ENCODE measurements at regions of chr15 and their contacts with region 1.

Region 1: GRCh38 chr15:42065033-42065432 is 29.3 kb downstream of the PLA2G4D start:
- DNase-seq: no peak
- H3K4me3 ChIP-seq: no peak overlapping the region
- H3K4me1 ChIP-seq: no peaks in the 10 kb centered on the region
- H3K27me3 ChIP-seq: no peaks in the 10 kb centered on the region

Region 2: GRCh38 chr15:42474827-42475226 is 409.8 kb after region 1 on chr15:
- in situ Hi-C with region 1: loop called (anchors 5 kb)
- DNase-seq: no peak
- H3K4me3 ChIP-seq: no peak overlapping the region
- H3K4me1 ChIP-seq: no peaks in the 10 kb centered on the region
- H3K27me3 ChIP-seq: no peaks in the 10 kb centered on the region

Region 3: DNA sequence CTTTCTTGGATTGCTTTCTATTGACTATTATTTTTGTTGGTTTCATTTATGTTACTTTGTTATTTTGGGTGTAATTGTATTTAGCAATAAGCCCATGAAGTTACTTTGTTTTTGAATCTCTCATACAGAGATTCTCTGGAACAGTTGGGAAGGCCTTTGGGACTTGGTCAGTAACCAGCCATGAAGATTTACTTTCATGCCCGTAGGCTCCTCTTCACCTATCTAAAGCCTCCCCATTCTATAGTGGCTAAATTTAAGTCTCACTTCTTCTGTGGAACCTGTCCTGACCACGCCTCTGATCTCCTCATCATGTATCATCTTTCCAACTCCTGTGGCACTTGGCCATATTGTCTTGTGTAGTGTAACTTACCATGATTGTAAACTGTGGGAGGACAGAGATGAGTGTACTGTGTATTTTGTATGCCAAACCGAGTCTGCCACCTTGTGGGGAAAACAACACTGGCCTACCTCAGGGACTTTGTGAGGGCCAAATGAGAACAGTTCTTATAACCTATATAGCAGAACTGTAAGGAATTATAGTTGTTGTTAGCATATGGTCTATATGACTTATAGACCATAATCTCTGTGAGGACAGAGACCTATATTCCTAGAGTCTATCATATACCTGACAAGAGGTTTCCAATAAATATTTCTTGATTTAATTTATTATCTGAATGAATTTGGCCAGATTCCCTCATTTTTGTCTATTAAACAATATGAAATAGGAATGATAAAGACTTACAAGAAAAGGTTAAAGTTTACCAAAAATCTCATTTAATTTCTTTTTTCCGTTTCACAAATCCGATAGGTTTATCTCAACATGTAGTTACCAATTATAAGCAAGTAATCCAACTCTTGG is 585.4 kb after region 1 on chr15:
- in situ Hi-C with region 1: no loop called
- DNase-seq: peak; percentile 66 to 70
- H3K4me3 ChIP-seq: no peak overlapping the region
- H3K4me1 ChIP-seq: no peaks in the 10 kb centered on the region
- H3K27me3 ChIP-seq: no peaks in the 10 kb centered on the region

Measured in HAP-1 (cell line).